ENCODE measurements at regions of chrX and their contacts with region 1.

Region 1: GRCh38 chrX:21972721-21973120 is 32.2 kb downstream of the SMS start:
- DNase-seq: peak; percentile 79
- H3K4me3 ChIP-seq: no peak overlapping the region
- H3K27ac ChIP-seq: peak overlapping the region; percentile 56
- H3K4me1 ChIP-seq: 0 out of 2 replicates have a peak, but pooled peaks cover 13% of the 10 kb centered on the region
- H3K27me3 ChIP-seq: no peaks in the 10 kb centered on the region

Region 2: DNA sequence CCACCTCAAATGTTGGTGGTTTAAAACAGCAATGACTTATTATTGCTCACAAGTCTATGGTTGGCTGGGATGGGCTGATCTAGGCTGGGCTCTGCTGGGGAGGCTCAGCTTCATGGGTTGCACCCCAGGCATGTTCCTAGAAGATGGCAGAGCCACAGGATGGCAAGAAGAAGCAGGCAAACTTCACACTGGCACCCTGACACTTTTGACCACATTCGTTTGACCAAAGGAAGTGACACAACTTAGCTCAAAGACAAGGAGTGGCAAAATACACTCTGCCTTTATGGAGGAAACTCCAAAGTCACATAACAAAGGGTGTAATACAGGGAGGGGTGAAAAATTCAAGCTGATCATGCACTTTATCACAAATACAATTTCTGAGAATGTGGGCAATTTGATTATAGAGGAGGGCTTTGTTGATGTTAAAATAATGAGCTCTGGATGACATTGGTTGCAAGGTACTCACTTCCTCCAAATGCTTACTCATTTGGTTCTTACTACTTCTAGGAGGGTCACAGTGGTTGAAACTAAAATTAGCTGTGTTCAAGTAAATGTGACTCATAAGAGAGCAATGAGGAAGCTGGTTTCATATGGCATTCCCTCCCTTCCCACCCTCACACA is 1456.8 kb before region 1 on chrX:
- in situ Hi-C with region 1: loop called (anchors 25 kb)
- DNase-seq: peak; percentile 85
- H3K4me3 ChIP-seq: no peak overlapping the region
- H3K27ac ChIP-seq: peak overlapping the region; percentile 72
- H3K4me1 ChIP-seq: peaks cover 42% of the 10 kb centered on the region
- H3K27me3 ChIP-seq: no peaks in the 10 kb centered on the region

Region 3: GRCh38 chrX:22063284-22063683 is 90.6 kb after region 1 on chrX:
- in situ Hi-C with region 1: no loop called
- DNase-seq: no peak
- H3K4me3 ChIP-seq: no peak overlapping the region
- H3K27ac ChIP-seq: no peak overlapping the region
- H3K4me1 ChIP-seq: peaks cover 13% of the 10 kb centered on the region
- H3K27me3 ChIP-seq: no peaks in the 10 kb centered on the region